Heart right ventricle (tissue), 16 donors: ENCODE measurements at regions of chr9 and their contacts with region 1.

Region 1: DNA sequence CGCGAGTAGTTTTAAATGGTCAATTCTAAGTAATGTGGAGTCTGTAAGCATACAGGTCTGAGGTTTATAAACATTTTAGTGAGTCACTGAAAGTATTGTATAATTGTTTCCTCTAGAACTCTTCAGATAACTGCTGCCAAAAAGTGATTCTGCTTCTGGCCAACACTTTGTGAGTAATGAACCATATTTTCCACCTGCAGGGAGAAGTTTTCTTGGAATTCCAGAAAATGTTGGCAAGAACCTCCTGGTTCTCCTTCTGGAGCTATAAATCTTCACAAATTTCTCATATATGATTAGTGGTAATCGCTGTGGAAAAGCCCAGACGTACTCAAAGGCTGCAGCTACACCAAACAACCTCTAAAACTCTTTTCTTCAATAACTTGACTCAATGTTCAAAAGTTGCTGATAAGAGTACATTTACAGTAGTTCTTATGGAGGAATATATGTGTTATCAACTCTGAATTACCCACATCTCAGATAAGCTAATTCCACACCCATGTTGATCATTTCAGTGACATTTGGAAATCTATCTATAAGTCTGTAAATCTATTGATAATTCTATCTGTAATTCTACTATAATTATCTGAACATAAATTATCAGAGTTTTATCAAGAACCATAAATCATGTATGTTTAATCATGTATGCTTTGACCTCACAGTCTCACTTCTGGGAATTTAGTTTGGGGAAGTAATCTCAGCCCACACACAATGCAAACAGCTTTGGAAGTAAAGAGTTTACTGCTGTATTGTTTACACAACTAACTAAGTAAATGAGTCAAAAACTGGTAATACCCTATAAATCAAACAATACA is 74.1 kb downstream of the FNBP1 start:
- DNase-seq: no peak
- ATAC-seq: peak in 6 of 8 donors; percentile 36 to 68 (median 54)
- H3K4me3 ChIP-seq: no peak overlapping the region
- H3K27ac ChIP-seq: peak overlapping the region in 4 of 10 donors; percentile 31 to 46 (median 44)
- H3K4me1 ChIP-seq: peaks cover 0 to 45% (median 33%) of the 10 kb centered on the region in 9 donors
- H3K27me3 ChIP-seq: no peaks in the 10 kb centered on the region
- CTCF ChIP-seq: no peak

Region 2: DNA sequence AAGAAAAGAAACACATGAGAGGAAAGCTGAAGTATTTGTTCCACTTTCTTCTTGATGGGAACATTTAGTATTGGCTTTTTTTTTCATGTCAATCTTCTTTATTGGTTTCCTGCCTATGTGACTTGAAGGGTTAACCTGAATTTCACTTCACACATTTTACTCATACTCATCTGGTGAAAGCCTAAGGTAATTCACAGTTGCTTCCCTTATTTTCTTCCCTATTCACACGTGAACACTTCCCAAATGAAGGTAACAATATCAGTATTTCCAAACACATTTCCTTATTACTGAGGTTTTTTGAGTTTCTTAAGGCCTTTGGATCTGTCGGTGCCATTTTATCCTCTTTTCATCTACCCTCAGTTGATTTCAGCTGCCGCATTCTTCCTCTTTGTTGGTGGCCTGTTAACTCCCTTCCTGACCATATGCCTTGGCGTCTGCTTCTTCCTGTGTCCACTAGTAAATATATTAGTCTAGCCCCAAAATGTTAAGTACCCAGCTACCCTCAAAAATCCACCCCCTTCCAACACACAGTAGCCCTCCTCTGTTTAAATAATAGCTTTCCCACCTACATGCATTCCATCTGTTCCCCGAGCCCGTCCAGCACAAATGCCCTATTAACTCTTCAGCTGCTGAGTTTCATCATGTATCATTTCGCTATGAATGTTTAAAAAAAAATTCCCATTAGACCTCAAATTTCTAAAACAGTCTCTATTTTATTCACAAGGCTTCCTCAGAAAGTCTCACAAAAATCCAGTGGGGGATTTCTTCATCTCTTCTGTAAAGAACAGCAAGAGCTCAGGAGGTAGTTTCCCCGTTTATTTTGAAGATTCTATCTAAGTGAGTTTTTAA is 36.4 kb before region 1 on chr9:
- intact Hi-C with region 1: loop called in 1 of 10 experiments (anchors 5 kb)
- DNase-seq: peak in 1 of 2 donors; percentile 13
- ATAC-seq: peak in 5 of 8 donors; percentile 38 to 61 (median 48)
- H3K4me3 ChIP-seq: peak overlapping the region in 3 of 10 donors; percentile 2 to 4 (median 3)
- H3K27ac ChIP-seq: peak overlapping the region in 8 of 10 donors; percentile 9 to 80 (median 72)
- H3K4me1 ChIP-seq: peaks cover 3 to 61% (median 40%) of the 10 kb centered on the region in 9 donors
- H3K27me3 ChIP-seq: no peaks in the 10 kb centered on the region
- CTCF ChIP-seq: no peak

Region 3: GRCh38 chr9:130156672-130157071 is 187.8 kb after region 1 on chr9:
- intact Hi-C with region 1: no loop called
- DNase-seq: no peak
- ATAC-seq: peak in 4 of 8 donors; percentile 23 to 65 (median 40)
- H3K4me3 ChIP-seq: no peak overlapping the region
- H3K27ac ChIP-seq: no peak overlapping the region
- H3K4me1 ChIP-seq: no peaks in the 10 kb centered on the region
- H3K27me3 ChIP-seq: no peaks in the 10 kb centered on the region
- CTCF ChIP-seq: peak in 4 of 9 donors; percentile 15 to 33 (median 23)